CD8-positive, alpha-beta T cell (primary cell): ENCODE measurements at regions of chr3 and their contacts with region 1.

Region 1: DNA sequence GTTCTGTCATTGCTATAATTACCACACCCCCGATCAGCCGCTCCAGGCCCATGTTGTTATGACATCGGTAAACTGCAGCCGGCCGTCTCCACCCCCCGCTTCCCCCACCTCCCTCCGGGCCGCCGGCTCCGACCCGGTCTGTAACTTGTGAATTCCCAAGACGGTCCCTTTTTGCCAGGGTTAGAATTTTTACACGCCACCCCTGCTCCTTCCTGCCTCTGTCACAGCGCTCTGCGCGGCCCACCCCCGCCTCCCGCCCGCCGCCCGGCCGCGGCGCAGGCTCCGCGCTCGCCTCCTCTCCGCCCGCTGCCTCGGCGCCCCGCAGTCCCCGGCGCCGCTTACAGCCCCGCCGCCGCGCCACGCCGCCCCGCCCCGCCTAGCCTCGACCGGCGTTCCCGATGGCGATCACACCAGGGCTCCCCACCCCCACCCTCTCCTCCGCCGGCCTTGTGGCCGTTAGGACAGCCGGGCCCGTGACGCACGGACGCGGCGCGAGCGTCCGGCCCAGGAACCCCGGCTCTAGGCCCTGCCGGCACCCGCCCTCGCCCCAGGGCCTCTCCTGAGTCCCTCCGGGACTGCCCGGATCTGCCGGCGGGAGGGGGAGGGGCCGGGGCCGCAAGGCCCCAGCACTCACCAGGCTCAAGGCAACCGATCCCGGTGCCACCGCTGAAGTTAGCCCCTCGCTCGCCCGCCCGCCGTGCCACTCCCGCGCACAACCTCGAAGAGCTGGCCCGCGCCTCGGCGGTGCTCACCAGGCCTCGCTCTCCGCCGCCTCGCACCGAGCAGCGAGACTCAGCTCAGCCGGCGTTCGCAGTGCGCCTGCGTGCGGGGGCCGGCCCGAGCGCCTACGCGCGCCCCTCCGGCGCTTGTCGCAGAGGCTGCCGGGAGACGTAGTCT is at the start of gene KPNA1:
- DNase-seq: peak; percentile 74 to 95 (median 85)
- ATAC-seq: peak; percentile 86
- H3K4me3 ChIP-seq: peak within 1 kb of the TSS; percentile 67 to 74
- H3K4me3 Mint-ChIP-seq: peak within 1 kb of the TSS; percentile 74
- H3K27ac ChIP-seq: peak within 1 kb of the TSS; percentile 88 to 89
- H3K27ac Mint-ChIP-seq: peak within 1 kb of the TSS; percentile 89
- H3K4me1 ChIP-seq: peaks cover 18% of the 10 kb centered on the region
- H3K4me1 Mint-ChIP-seq: peaks cover 42% of the 10 kb centered on the region
- H3K27me3 ChIP-seq: no peaks in the 10 kb centered on the region
- H3K27me3 Mint-ChIP-seq: no peaks in the 10 kb centered on the region
- CTCF ChIP-seq: no peak
- total RNA-seq, gene KPNA1: 39.3 to 45.0 TPM

Region 2: DNA sequence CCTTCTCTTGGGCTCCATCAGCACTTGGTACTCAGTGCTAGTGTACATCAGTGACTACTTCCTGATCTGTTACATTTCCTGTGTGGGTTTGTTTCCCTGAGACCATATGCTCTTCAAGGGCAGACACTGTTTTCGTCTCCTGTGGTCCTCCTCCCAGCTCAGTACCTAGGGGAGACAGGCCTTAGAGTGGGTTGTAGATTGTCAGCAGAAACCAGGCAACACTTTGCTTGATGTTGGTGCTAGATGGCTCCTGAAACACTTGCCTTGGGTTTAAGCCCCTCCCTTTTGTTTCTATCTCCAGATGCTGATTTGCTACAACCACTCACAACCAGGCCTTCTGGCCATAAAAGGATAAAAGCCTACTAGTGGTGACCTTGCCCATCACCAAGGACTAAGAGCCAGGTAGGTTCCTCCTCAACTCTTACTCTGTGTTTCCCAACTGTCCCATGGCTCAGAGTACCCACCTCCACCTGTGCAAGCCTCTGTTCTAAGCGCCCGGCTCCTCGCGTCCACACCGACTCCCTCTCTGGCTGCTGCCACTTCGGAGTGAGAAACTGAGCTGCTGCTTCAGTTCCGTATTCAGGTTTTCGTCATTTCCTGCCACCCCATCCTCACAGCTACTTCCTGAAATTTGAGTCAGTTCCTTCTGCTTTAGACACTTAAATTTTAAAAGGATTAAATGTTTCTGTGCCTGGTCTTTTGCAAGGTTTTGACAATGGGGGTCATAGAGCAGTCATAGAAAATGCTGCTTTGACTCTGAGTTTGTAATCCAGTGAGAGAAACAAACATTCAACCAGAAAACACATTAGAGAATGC is 853.8 kb before region 1 on chr3 and contains the start of gene HCLS1:
- CTCF ChIA-PET with region 1: no interaction called
- POLR2A ChIA-PET with region 1: interaction called, 3 read pairs
- intact Hi-C with region 1: loop called in 1 of 2 experiments (anchors 10 kb)
- DNase-seq: peak; percentile 52 to 90 (median 71)
- ATAC-seq: peak; percentile 83
- H3K4me3 ChIP-seq: peak within 1 kb of the TSS; percentile 58
- H3K4me3 Mint-ChIP-seq: peak within 1 kb of the TSS; percentile 92
- H3K27ac ChIP-seq: peak within 1 kb of the TSS; percentile 86 to 95
- H3K27ac Mint-ChIP-seq: peak within 1 kb of the TSS; percentile 99
- H3K4me1 ChIP-seq: peaks cover 43% of the 10 kb centered on the region
- H3K4me1 Mint-ChIP-seq: peaks cover 54% of the 10 kb centered on the region
- H3K27me3 ChIP-seq: no peaks in the 10 kb centered on the region
- H3K27me3 Mint-ChIP-seq: no peaks in the 10 kb centered on the region
- CTCF ChIP-seq: no peak
- total RNA-seq, gene HCLS1: 162 to 179 TPM

Region 3: DNA sequence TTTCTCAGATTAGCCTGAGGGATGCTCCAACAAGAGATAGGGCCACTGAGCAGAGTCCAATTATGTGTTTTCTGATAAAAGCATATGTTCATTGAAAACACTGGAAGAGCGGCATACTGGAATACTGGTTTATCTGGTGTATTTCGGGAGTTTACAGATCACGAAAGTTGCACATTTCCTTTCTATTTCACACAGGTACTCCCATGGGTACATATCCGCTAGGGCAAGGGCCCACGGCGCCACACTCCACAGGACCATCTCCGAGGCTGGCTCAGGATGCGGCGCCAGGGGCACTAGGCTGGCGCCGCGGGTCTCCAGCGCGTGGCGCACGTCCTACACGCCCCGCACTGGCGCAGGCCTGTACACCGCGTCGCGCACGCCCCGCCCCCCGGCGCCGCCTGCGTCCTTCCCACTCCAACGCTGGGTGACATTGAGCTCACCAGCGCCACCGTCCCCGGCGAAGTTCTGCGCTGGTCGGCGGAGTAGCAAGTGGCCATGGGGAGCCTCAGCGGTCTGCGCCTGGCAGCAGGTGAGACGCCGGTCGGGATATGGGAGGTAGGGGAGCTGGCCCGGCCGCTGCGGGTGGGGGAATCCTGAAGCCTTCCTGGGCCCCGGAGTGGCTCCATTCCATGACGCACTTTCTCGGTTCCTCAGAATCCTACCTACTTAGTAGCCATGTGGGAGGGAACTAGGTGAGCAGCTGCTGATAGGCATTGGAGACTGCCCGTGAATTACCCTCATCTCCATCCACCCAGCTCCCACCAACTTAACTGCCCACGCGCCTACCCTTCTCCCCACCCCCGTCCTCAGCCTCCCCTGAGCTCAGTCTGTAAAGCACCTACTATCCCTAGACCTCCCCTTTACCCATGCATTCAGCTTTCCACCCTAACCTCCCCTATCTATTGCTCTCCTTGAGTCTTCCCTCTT is 130.3 kb before region 1 on chr3 and contains the start of gene FAM162A:
- CTCF ChIA-PET with region 1: no interaction called
- POLR2A ChIA-PET with region 1: interaction called, 15 read pairs
- intact Hi-C with region 1: loop called (anchors 1 to 2 kb)
- DNase-seq: peak; percentile 89 to 97 (median 93)
- ATAC-seq: peak; percentile 94
- H3K4me3 ChIP-seq: peak within 1 kb of the TSS; percentile 79 to 91
- H3K4me3 Mint-ChIP-seq: peak within 1 kb of the TSS; percentile 94
- H3K27ac ChIP-seq: peak within 1 kb of the TSS; percentile 73 to 83
- H3K27ac Mint-ChIP-seq: peak within 1 kb of the TSS; percentile 94
- H3K4me1 ChIP-seq: peaks cover 18% of the 10 kb centered on the region
- H3K4me1 Mint-ChIP-seq: peaks cover 51% of the 10 kb centered on the region
- H3K27me3 ChIP-seq: no peaks in the 10 kb centered on the region
- H3K27me3 Mint-ChIP-seq: no peaks in the 10 kb centered on the region
- CTCF ChIP-seq: peak; percentile 66
- total RNA-seq, gene FAM162A: 36.9 to 38.2 TPM

Region 4: GRCh38 chr3:122469659-122470058 is 44.7 kb before region 1 on chr3:
- CTCF ChIA-PET with region 1: no interaction called
- POLR2A ChIA-PET with region 1: no interaction called
- intact Hi-C with region 1: loop called (anchors 5 kb)
- DNase-seq: peak in 1 of 9 experiments; percentile 12
- ATAC-seq: no peak
- H3K4me3 ChIP-seq: no peak overlapping the region
- H3K4me3 Mint-ChIP-seq: peak overlapping the region; percentile 55
- H3K27ac ChIP-seq: no peak overlapping the region
- H3K27ac Mint-ChIP-seq: no peak overlapping the region
- H3K4me1 ChIP-seq: peaks cover 30% of the 10 kb centered on the region
- H3K4me1 Mint-ChIP-seq: peaks cover 68% of the 10 kb centered on the region
- H3K27me3 ChIP-seq: no peaks in the 10 kb centered on the region
- H3K27me3 Mint-ChIP-seq: no peaks in the 10 kb centered on the region
- CTCF ChIP-seq: no peak

Region 5: GRCh38 chr3:122793568-122794416 is 279.4 kb after region 1 on chr3 and contains the start of gene HSPBAP1:
- CTCF ChIA-PET with region 1: no interaction called
- POLR2A ChIA-PET with region 1: interaction called, 3 read pairs
- intact Hi-C with region 1: loop called (anchors 1 to 5 kb)
- DNase-seq: peak; percentile 72 to 95 (median 90)
- ATAC-seq: peak; percentile 67
- H3K4me3 ChIP-seq: peak within 1 kb of the TSS; percentile 78 to 81
- H3K4me3 Mint-ChIP-seq: peak within 1 kb of the TSS; percentile 91
- H3K27ac ChIP-seq: peak within 1 kb of the TSS; percentile 77 to 91
- H3K27ac Mint-ChIP-seq: no peak within 1 kb of the TSS
- H3K4me1 ChIP-seq: peaks cover 28% of the 10 kb centered on the region
- H3K4me1 Mint-ChIP-seq: peaks cover 38% of the 10 kb centered on the region
- H3K27me3 ChIP-seq: no peaks in the 10 kb centered on the region
- H3K27me3 Mint-ChIP-seq: no peaks in the 10 kb centered on the region
- CTCF ChIP-seq: no peak
- total RNA-seq, gene HSPBAP1: 8.7 to 9.3 TPM